Testis (tissue), 5 donors: ENCODE measurements at regions of chr11 and their contacts with region 1.

Region 1: DNA sequence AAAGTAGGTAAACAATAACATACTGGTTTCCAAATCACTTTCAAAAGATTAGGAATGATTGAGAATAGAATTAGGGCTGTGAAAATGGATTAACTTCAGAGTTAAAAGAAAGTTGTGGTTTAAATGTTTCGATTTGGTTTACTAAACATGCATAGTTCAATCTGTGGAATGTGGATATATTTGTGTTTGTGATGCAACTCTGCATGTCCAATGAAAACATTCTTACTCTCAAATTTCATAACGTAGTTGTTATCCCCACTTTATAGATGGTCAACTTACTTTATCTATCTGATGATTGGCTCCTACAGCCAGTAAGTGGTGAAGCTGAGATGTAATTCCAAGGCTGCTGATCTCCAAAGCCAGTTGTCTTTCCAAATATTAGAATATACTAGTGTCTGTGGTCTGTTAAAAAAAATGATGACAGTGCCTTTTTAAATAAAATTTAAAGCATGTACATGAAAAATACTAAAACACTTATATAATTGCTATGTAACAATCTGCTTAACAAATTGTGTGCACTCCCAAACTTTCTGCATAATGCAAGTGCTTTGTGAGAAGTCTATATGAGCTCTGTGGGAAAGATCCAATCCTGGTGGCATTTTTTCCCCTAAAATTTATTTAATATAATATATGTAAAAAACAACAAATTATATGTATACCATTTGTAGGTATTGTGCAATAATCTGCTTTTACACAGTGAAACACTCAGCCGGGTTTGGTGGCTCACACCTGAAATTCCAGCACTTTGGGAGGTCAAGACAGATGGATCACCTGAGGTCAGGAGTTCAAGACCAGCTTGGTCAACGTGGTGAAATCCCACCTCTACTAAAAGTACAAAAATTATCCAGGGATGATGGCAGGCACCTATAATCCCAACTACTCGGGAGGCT is 9.7 kb upstream of the SIK3 start:
- DNase-seq: no peak
- H3K4me3 ChIP-seq: no peak overlapping the region
- H3K27ac ChIP-seq: no peak overlapping the region
- H3K4me1 ChIP-seq: no peaks in the 10 kb centered on the region
- H3K27me3 ChIP-seq: no peaks in the 10 kb centered on the region
- CTCF ChIP-seq: no peak
- POLR2A ChIP-seq: no peak

Region 2: DNA sequence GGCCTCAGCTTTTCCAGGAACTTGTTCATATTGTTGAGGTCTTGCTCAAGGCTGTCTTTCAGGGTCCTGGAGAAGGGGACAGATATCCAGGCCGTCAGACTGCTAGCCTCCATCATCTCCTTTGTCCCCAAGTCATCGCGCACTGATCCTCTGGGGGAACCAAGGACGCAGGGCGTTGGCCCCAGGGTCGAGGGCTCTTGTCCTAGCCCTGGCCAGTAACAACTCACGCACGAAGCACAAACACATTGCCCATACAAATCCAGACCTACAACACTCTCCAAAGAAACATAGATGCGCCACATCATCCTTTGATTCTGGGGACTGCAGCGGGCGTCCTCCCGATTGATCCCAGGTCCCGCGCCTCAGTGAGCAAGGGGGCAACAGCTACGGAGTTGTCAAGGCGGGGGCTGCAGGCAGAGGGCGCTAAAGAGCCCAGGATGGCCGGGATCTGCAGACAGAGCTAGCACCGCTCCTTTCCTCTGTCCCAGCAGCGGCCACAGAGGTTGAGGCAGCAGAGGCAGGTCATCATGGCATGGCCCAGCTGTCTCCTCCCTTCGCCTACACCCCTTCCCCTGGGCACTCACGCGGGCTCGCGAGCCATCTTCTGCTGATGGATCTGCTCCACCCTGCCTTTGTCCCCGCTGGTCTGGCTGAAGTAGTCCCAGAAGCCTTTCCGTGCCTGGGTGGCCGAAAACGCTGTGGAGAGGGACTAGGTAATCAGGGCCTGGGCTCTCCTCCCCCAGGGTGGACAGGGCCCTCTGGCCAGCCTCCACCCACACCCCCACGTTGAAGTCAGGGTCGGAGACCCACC is 316.7 kb before region 1 on chr11:
- intact Hi-C with region 1: loop called (anchors 5 kb)
- DNase-seq: peak; percentile 89
- H3K4me3 ChIP-seq: no peak overlapping the region
- H3K27ac ChIP-seq: no peak overlapping the region
- H3K4me1 ChIP-seq: peaks cover 11% of the 10 kb centered on the region
- H3K27me3 ChIP-seq: no peaks in the 10 kb centered on the region
- CTCF ChIP-seq: peak; percentile 90 to 93 (median 92)
- POLR2A ChIP-seq: no peak

Region 3: DNA sequence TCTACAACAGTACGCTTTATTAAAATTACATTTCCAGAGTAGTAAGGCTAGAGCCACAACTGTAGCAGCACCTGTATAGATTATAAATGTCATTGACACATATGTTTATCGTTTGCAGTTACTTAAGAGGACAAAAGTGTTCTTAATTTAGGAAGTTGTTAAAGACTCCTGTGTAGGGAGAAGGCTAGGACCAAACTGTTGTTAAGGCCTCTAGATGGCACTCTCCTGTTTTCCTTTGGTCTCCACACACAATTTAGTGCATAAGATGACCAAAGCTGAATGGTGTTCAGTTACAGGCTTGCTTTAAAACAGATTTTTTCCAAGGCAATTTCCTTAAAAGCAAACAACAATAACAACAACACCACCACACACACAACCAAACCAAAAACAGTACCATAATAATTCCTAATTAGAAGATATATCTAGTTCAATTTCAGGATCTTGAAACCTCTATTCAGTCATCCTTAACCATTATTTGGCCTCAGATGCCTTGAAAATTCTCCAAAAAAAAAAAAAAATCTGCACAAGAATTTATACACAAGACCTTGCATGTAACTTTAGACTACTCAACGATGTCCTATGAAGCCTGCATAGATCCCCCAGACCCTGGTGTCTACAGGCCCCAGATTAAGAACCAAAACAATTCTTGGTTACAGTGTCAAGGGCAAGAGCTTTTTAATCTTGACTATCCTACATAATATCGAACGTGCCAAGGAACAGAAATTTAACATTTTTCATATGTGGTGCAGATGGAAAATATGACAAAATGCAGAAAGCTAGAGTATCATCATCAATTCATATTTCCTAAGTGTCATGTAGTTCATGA is 227.9 kb before region 1 on chr11:
- intact Hi-C with region 1: loop called (anchors 10 kb)
- DNase-seq: no peak
- H3K4me3 ChIP-seq: no peak overlapping the region
- H3K27ac ChIP-seq: no peak overlapping the region
- H3K4me1 ChIP-seq: no peaks in the 10 kb centered on the region
- H3K27me3 ChIP-seq: no peaks in the 10 kb centered on the region
- CTCF ChIP-seq: peak; percentile 29 to 62 (median 50)
- POLR2A ChIP-seq: no peak